Activated CD8-positive, alpha-beta memory T cell treated with anti-CD3 and anti-CD28 coated beads, Interleukin-2, amount 10 ng/mL, durations not matched to agents 7 days and 5 days (primary cell): ENCODE measurements at regions of chr15 and their contacts with region 1.

Region 1: GRCh38 chr15:74988007-74988800 is 7.2 kb upstream of the SCAMP5 start:
- DNase-seq: peak; percentile 71
- ATAC-seq: peak; percentile 78
- H3K4me3 Mint-ChIP-seq: no peak overlapping the region
- H3K27ac Mint-ChIP-seq: no peak overlapping the region
- H3K4me1 Mint-ChIP-seq: peaks cover 19% of the 10 kb centered on the region
- H3K27me3 Mint-ChIP-seq: peaks cover 24% of the 10 kb centered on the region

Region 2: GRCh38 chr15:74956648-74957300 is 31.4 kb before region 1 on chr15 and contains the start of gene RPP25:
- CTCF ChIA-PET with region 1: interaction called, 18 read pairs
- DNase-seq: peak; percentile 80
- ATAC-seq: peak; percentile 96
- H3K4me3 Mint-ChIP-seq: peak within 1 kb of the TSS; percentile 69
- H3K27ac Mint-ChIP-seq: no peak within 1 kb of the TSS
- H3K4me1 Mint-ChIP-seq: peaks cover 46% of the 10 kb centered on the region
- H3K27me3 Mint-ChIP-seq: peaks cover 46% of the 10 kb centered on the region
- total RNA-seq, gene RPP25: 6.8 to 7.5 TPM

Region 3: GRCh38 chr15:75022783-75023180 is 34.6 kb after region 1 on chr15:
- CTCF ChIA-PET with region 1: no interaction called
- DNase-seq: no peak
- ATAC-seq: no peak
- H3K4me3 Mint-ChIP-seq: peak overlapping the region; percentile 90
- H3K27ac Mint-ChIP-seq: no peak overlapping the region
- H3K4me1 Mint-ChIP-seq: peaks cover 19% of the 10 kb centered on the region
- H3K27me3 Mint-ChIP-seq: no peaks in the 10 kb centered on the region